ENCODE measurements at regions of chr19 and their contacts with region 1.

Region 1: GRCh38 chr19:31066385-31066784 is 282.9 kb downstream of the TSHZ3 start:
- DNase-seq: peak; percentile 86
- H3K4me3 ChIP-seq: no peak overlapping the region
- H3K27ac ChIP-seq: peak overlapping the region; percentile 38
- H3K4me1 ChIP-seq: peaks cover 65% of the 10 kb centered on the region
- H3K27me3 ChIP-seq: no peaks in the 10 kb centered on the region
- CTCF ChIP-seq: no peak

Region 2: DNA sequence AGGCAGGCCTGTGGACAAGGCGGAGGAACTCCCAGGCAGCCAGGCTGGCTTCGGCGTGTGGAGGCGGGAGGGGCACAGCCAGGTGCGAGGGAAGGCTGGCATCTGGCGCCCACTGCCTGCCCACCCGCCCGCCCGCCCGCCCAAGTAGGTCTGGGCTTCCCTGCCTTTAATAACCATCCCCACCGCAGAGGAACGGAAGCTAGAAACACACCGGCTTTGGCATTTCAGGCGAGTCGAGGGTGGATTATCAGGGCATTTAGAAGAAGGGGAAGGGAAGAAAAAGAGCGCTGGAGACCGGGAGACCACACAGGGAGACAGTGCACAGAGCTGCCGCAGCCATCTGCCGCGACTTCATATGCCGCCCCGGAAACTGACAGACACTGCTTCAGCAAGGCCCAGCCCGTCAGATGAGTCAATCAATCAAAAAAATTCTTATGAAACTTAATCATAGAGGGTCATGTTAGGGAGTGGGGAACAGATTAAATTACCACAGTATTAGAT is 83.1 kb after region 1 on chr19:
- CTCF ChIA-PET with region 1: no interaction called
- POLR2A ChIA-PET with region 1: no interaction called
- intact Hi-C with region 1: loop called (anchors 5 kb)
- DNase-seq: peak; percentile 84
- H3K4me3 ChIP-seq: no peak overlapping the region
- H3K27ac ChIP-seq: peak overlapping the region; percentile 53
- H3K4me1 ChIP-seq: peaks cover 30% of the 10 kb centered on the region
- H3K27me3 ChIP-seq: no peaks in the 10 kb centered on the region
- CTCF ChIP-seq: no peak

Region 3: GRCh38 chr19:31220541-31220940 is 154.2 kb after region 1 on chr19:
- CTCF ChIA-PET with region 1: no interaction called
- POLR2A ChIA-PET with region 1: no interaction called
- intact Hi-C with region 1: loop called (anchors 5 kb)
- DNase-seq: peak; percentile 52
- H3K4me3 ChIP-seq: no peak overlapping the region
- H3K27ac ChIP-seq: no peak overlapping the region
- H3K4me1 ChIP-seq: peaks cover 23% of the 10 kb centered on the region
- H3K27me3 ChIP-seq: no peaks in the 10 kb centered on the region
- CTCF ChIP-seq: no peak

Measured in A673 (cell line).